CD4-positive, alpha-beta T cell (primary cell): ENCODE measurements at regions of chr10 and their contacts with region 1.

Region 1: GRCh38 chr10:72248468-72249151 is 25.1 kb upstream of the DDIT4 start:
- DNase-seq: peak; percentile 54 to 96 (median 64)
- ATAC-seq: peak; percentile 87
- H3K4me3 ChIP-seq: peak overlapping the region; percentile 31
- H3K4me3 Mint-ChIP-seq: peak overlapping the region; percentile 85
- H3K27ac ChIP-seq: peak overlapping the region; percentile 20 to 62
- H3K27ac Mint-ChIP-seq: peak overlapping the region; percentile 96
- H3K4me1 ChIP-seq: peaks cover 99% of the 10 kb centered on the region
- H3K4me1 Mint-ChIP-seq: peaks cover 86% of the 10 kb centered on the region
- H3K27me3 ChIP-seq: no peaks in the 10 kb centered on the region
- H3K27me3 Mint-ChIP-seq: no peaks in the 10 kb centered on the region
- CTCF ChIP-seq: no peak

Region 2: GRCh38 chr10:72009411-72010081 is 239.1 kb before region 1 on chr10:
- CTCF ChIA-PET with region 1: no interaction called
- POLR2A ChIA-PET with region 1: no interaction called
- intact Hi-C with region 1: no loop called
- DNase-seq: no peak
- ATAC-seq: no peak
- H3K4me3 ChIP-seq: no peak overlapping the region
- H3K4me3 Mint-ChIP-seq: no peak overlapping the region
- H3K27ac ChIP-seq: no peak overlapping the region
- H3K27ac Mint-ChIP-seq: no peak overlapping the region
- H3K4me1 ChIP-seq: no peaks in the 10 kb centered on the region
- H3K4me1 Mint-ChIP-seq: no peaks in the 10 kb centered on the region
- H3K27me3 ChIP-seq: no peaks in the 10 kb centered on the region
- H3K27me3 Mint-ChIP-seq: no peaks in the 10 kb centered on the region
- CTCF ChIP-seq: no peak

Region 3: DNA sequence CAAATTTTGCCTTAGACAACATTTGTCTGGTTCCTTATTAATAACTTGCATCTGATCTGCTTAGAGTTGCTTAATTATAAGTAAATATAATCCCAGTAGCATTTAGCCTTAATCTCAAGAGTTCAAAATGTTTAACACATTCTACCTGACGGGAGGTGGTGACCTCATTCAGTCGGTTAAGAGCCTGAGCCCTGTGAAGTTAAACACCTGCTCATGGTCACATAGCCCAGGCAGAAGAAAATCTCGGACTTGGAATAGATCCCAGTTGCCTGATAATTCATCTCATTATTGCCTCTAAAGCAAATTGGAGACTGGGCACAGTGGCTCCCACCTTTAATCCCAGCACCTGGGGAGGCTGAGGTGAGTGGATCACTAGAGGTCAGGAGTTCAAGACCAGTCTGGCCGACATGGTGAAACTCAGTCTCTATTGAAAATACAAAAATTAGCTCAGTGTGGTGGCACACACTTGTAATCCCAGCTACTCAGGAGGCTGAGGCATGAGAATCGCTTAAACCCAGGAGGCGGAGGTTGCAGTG is 14.0 kb before region 1 on chr10:
- CTCF ChIA-PET with region 1: no interaction called
- POLR2A ChIA-PET with region 1: interaction called, 14 read pairs
- intact Hi-C with region 1: no loop called
- DNase-seq: no peak
- ATAC-seq: no peak
- H3K4me3 ChIP-seq: no peak overlapping the region
- H3K4me3 Mint-ChIP-seq: no peak overlapping the region
- H3K27ac ChIP-seq: no peak overlapping the region
- H3K27ac Mint-ChIP-seq: no peak overlapping the region
- H3K4me1 ChIP-seq: peaks cover 5% of the 10 kb centered on the region
- H3K4me1 Mint-ChIP-seq: peaks cover 26% of the 10 kb centered on the region
- H3K27me3 ChIP-seq: no peaks in the 10 kb centered on the region
- H3K27me3 Mint-ChIP-seq: no peaks in the 10 kb centered on the region
- CTCF ChIP-seq: no peak

Region 4: DNA sequence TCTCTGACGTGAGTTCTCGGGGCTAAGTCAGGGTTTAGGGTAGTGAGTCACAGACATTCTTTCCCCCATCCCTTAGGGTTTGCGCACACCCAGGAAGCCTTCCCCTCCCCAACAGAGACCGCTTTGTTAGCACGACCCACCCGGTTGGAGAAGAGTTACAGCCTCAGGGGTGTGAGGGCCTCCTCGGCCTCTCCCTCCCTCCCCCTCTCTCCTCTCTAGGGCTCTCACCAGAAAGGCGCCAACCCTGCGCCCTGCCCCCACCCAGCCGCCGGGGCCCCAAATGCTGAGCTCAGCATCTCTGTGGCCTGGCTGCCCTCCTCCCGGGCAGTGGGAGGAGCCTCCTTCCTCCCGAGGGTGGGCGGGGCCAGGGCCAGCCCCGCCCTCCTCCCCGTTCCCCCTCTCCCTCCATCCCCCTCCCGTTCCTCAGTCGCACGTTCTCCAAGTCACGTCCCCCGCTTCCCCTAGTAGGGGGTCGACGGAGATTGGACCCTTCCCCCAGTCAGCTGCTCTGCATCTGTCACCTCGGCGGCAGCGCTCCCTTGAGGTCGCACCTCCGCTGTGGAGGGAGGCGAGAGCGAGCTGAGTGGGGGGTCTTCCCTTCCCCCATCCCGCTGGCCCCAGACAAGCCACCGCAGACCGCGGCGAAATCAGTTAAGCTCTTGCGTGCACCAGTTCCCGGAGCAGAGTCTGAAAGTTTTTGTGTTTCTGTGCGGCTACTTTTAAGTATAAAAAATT is 12.1 kb after region 1 on chr10:
- CTCF ChIA-PET with region 1: interaction called, 3 read pairs
- POLR2A ChIA-PET with region 1: interaction called, 39 read pairs
- intact Hi-C with region 1: loop called in 1 of 2 experiments (anchors 2 kb)
- DNase-seq: peak; percentile 64 to 91 (median 77)
- ATAC-seq: peak; percentile 76
- H3K4me3 ChIP-seq: peak overlapping the region; percentile 77
- H3K4me3 Mint-ChIP-seq: peak overlapping the region; percentile 84
- H3K27ac ChIP-seq: peak overlapping the region; percentile 68 to 80
- H3K27ac Mint-ChIP-seq: peak overlapping the region; percentile 85
- H3K4me1 ChIP-seq: peaks cover 80% of the 10 kb centered on the region
- H3K4me1 Mint-ChIP-seq: peaks cover 72% of the 10 kb centered on the region
- H3K27me3 ChIP-seq: no peaks in the 10 kb centered on the region
- H3K27me3 Mint-ChIP-seq: no peaks in the 10 kb centered on the region
- CTCF ChIP-seq: no peak